ENCODE measurements at regions of chr7 and their contacts with region 1.

Region 1: GRCh38 chr7:149872419-149873073 is 1.2 kb upstream of the ATP6V0E2 start:
- DNase-seq: peak; percentile 55
- H3K4me3 Mint-ChIP-seq: peak overlapping the region; percentile 78
- H3K27ac Mint-ChIP-seq: peak overlapping the region; percentile 85
- H3K4me1 Mint-ChIP-seq: peaks cover 86% of the 10 kb centered on the region
- H3K27me3 Mint-ChIP-seq: no peaks in the 10 kb centered on the region

Region 2: GRCh38 chr7:149838224-149838947 is 34.2 kb before region 1 on chr7 and contains the start of gene ZNF862:
- CTCF ChIA-PET with region 1: interaction called, 10 read pairs
- DNase-seq: peak; percentile 98
- H3K4me3 Mint-ChIP-seq: peak within 1 kb of the TSS; percentile 85
- H3K27ac Mint-ChIP-seq: peak within 1 kb of the TSS; percentile 84
- H3K4me1 Mint-ChIP-seq: peaks cover 23% of the 10 kb centered on the region
- H3K27me3 Mint-ChIP-seq: peaks cover 15% of the 10 kb centered on the region

Measured in activated naive CD4-positive, alpha-beta T cell treated with anti-CD3 and anti-CD28 coated beads, Interleukin-2, amount 10 ng/mL, durations not matched to agents 7 days and 5 days (primary cell).